Cardiac septum (tissue), 1 donor: ENCODE measurements at regions of chr1 and their contacts with region 1.

Region 1: DNA sequence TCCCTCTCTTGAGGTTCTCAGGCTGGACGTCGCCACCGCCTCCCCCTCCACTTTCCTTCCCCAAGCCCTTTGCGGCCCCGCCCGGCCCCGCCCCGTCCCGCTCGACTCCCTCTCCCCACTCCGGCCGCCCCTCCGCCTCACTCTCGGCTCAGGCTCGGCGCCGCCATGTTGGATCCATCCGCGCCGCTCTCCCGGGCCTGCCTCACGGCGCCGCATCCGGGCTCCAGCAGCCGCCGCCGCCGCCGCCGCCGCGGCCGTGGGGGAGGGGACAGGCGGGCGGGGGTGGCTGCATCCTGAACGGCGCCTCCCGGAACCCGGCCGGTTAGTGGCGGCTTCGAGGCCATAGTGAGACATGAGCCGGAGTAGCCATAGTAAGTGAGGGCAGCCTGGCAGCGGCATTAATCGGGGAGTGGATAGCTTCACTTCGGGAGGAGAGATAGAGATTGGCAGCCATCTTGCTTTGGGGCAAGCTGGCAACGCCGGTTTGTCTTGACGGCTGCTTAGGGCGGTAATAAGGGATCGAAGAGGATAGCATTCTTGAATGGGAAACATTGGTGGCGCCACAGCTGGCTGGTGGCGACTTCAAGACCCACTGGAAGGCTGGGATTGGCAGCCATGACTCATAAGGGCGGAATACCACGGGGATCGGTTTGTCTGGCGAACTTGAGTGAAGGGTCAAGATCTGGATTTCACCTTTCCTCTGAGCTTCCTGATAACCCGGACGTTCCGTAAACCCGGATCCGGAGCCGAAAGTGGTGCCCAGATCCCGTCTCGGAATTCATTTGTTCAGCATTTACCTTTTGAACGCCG is at the start of gene DEDD:
- DNase-seq: peak; percentile 97
- total RNA-seq, gene DEDD: 28.3 TPM

Region 2: GRCh38 chr1:160837558-160838205 is 294.9 kb before region 1 on chr1:
- intact Hi-C with region 1: no loop called
- DNase-seq: peak; percentile 80

Region 3: GRCh38 chr1:161033751-161034150 is 98.9 kb before region 1 on chr1:
- intact Hi-C with region 1: no loop called
- DNase-seq: no peak

Region 4: DNA sequence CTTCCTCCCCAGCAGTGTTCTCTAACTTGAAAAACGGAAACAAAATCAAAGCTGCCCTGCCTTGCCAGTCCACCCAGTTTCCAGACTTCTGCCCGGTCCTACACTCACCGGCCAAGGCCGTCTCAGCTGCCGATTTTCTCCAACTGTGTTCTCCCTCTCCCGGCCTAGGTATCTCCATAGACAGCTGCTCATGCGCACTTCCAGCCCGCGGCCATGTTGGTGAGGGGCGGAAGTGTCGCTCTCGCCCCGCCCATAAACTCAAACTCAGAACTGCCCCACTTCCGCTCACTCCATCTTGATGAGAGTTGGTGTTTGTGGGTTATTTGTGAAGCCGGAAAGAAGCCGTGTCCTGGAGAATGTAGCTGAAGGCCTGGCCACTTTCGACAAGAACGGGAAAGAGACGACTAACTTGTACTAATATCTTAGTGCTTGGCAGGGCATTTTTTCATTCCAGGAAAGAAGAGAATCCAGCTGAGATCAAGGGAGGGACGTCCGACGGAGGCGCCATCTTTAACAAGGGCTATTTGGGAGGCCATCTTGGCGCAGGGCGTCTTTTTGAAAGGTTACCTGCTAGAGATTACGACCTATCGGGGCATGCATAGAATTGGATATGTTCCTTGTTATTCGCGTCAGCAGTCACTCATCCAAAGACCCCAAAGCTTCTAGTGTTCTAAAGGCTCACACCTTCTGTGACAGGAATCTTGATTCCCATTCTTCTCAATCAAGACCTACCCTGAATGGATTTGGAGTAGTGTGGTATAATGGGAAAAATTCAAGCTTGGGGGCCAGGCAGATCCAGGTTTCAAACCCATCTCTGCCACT is 86.7 kb before region 1 on chr1 and contains the start of gene USF1:
- intact Hi-C with region 1: loop called (anchors 2 kb)
- DNase-seq: peak; percentile 96
- total RNA-seq, gene USF1: 29.2 TPM

Region 5: DNA sequence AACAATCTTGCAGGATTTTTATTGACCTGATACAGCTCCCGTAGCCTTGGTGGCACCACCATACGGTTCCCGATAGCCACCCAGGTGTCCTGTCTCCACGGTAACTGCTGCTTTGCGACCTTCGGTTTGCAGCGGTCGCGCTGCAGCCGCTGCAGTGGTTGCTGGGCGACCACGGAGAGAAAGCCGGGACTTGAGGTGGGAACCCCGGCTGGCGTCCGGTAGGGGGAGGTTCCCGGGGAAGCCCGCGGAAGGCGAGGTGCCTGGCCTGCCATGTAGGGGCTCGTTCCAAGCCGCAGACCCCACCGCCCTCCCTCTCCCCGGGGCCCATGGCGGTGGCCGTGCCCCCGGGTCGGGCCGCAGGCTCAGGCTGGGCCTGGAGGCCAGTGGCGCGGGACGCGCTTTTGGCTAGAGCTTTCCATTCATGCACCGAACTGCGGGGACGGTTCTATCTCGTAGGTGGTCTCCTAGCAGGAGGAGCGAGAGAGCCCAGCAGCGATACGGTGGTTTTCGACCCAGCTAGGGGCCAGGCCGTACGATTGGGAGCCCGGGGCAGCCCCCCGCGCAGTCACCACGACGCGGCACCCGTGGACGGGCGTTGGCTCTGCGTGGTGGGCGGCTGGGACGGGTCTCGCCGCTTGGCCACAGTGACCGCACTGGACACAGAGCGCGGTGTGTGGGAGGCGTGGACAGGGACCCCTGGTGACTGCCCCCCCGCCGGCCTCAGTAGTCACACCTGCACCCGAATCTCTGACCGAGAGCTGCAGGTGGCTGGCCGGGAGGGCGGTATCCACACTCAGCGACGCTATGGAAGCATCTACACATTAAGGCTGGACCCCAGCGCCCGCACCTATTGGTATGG is 34.2 kb before region 1 on chr1 and contains the start of gene KLHDC9:
- intact Hi-C with region 1: loop called (anchors 1 kb)
- DNase-seq: peak; percentile 83
- total RNA-seq, gene KLHDC9: 10.7 TPM

Region 6: GRCh38 chr1:161117759-161118581 is 14.6 kb before region 1 on chr1 and contains the starts of genes NIT1 and PFDN2:
- intact Hi-C with region 1: loop called (anchors 2 kb)
- DNase-seq: peak; percentile 95
- total RNA-seq, gene NIT1: 31.3 TPM
- total RNA-seq, gene PFDN2: 43.1 TPM

Region 7: DNA sequence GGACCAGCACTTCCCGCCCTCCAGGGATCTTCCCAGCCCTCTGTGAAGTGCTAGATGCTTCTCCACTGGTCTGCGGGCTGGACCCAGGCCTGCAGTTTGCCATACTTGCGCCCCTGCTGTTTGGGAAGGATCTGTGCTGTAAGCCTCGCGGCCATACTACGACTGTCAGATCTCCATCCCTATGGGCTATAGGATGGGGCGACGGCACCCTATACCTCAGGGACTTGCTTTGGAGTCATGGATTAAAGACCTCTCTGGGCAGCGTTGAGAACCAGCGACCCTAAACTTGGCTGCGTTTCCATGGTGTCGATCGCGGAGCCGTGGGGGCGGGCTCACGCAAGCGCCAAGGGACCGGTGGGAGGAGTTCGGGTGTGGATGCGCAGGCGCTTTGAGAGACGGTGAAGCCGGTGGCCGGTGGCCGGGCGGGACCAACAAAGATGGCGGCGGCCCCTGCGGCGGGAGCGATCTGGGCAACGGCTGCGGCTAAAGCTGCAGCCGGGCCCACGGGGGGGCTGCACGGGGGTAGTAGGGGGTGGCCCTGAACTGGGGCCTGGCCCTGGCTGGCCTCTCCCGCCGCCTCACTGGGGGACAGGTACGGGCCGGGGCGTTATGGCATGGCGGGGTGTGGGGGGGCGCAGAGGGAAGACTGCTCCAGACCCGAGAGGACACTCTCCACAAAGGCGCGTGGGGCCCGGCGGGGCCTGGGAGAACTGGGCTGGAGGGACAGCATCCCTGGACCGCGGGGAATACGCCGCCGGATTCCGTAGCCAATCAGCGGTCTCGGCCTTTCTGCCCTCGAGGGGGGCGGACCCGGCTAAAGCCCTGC is 26.7 kb after region 1 on chr1 and contains the start of gene USP21:
- intact Hi-C with region 1: loop called (anchors 2 kb)
- DNase-seq: peak; percentile 98
- total RNA-seq, gene USP21: 17.4 TPM

Region 8: DNA sequence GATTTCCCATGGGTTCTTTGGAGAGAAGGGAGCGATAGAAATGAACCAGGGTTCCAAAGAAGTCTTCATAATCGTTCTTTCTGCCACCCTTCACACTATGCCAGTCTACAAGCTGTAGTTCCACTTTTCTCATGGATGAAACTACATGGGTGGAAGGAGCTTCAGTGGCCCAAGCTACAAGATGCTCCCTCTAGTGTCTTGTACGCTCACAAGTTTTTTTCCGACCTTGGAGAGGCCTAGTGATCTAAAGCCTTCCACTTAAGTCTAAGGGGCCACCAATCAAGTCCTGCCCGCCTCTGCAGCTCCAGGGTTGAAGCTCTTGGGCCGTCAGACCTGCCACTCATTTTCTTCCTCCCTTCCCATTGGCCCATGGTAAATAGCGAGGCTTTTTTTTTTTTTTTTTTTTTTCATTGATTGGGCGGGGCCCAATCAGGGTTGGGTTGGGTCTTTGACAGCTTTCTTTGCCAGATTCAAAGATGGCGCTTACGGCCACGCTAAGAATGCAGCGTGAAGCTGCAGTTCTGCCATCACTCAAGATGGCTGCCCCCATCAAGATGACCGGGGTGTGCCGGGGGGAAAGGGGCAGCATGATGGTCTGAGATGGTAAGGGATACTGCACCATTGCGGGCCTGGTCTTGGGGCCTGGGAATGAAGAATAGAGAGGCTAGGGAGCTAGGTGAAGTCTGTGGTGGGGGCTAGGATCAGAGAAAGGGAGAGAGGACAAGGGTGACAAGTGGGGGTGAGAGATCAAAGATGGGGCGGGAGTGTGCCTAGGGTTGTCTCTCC is 93.1 kb after region 1 on chr1 and contains the start of gene TOMM40L:
- intact Hi-C with region 1: no loop called
- DNase-seq: peak; percentile 91
- total RNA-seq, gene TOMM40L: 34.1 TPM

Region 9: GRCh38 chr1:161258439-161259344 is 126.1 kb after region 1 on chr1 and contains the start of gene PCP4L1:
- intact Hi-C with region 1: no loop called
- DNase-seq: no peak
- total RNA-seq, gene PCP4L1: 0.38 TPM